ENCODE measurements at regions of chr11 and their contacts with region 1.

Region 1: DNA sequence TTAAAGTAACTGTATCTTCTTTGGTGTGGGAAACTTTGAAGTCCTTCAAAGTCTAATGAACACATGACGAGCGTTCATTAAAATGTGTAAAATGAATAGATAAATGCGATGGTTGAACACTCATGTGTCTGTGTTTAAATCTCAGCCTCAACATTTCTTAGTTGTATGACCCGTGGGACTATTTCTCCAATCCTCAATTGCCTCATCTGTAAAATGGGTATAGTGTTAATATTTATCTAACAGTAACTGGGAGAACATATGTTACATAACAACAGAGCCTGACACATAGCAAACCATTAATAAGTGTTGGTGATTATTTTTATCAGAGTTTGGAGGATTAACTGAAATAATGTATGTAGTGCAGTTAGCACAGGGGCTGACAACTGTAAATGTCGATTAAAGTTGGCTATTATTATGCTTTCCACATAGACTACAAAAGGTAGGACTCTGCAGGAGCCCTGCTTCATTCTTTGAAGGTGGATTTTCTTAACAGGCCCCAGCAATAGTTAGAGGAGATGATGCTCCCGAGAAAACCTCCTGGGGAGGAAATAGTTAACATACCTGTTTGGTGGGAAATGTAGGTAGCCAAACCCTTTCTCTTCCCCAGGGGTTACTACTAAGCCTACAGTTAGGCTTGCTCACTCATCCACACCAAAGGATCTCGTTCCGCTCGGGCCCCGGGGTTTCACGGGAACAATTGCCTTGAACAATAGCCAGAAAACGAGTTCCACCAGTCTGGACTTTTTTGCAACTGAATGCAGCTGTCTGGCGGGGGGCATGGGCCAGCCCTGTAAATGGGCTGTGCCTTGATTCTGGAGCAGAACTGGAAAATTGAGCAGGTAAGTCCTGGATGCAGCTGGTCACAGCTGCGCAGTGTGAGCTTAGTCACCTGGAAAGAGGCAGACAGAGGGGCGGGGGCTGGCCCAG is 133.4 kb downstream of the DBX1 start:
- DNase-seq: no peak
- ATAC-seq: no peak
- H3K4me3 ChIP-seq: no peak overlapping the region
- H3K27ac ChIP-seq: no peak overlapping the region
- H3K4me1 ChIP-seq: no peaks in the 10 kb centered on the region; a peak in 1 of 5 replicates
- H3K27me3 ChIP-seq: peaks cover 3 to 14% of the 10 kb centered on the region in 2 experiments; a peak in 4 of 5 replicates
- CTCF ChIP-seq: no peak
- EP300 ChIP-seq: no peak
- POLR2A ChIP-seq: no peak
- RAD21 ChIP-seq: no peak

Region 2: GRCh38 chr11:19962801-19963175 is 64.1 kb before region 1 on chr11:
- CTCF ChIA-PET with region 1: no interaction called
- POLR2A ChIA-PET with region 1: no interaction called
- in situ Hi-C with region 1: loop called (anchors 5 kb)
- intact Hi-C with region 1: no loop called
- DNase-seq: no peak
- ATAC-seq: no peak
- H3K4me3 ChIP-seq: no peak overlapping the region
- H3K27ac ChIP-seq: no peak overlapping the region
- H3K4me1 ChIP-seq: peaks cover 0 to 10% of the 10 kb centered on the region in 2 experiments; a peak in 3 of 5 replicates
- H3K27me3 ChIP-seq: no peaks in the 10 kb centered on the region
- CTCF ChIP-seq: no peak
- EP300 ChIP-seq: no peak
- POLR2A ChIP-seq: no peak
- RAD21 ChIP-seq: no peak

Measured in K562 (cell line).